Heart right ventricle (tissue), 16 donors: ENCODE measurements at regions of chr1 and their contacts with region 1.

Region 1: DNA sequence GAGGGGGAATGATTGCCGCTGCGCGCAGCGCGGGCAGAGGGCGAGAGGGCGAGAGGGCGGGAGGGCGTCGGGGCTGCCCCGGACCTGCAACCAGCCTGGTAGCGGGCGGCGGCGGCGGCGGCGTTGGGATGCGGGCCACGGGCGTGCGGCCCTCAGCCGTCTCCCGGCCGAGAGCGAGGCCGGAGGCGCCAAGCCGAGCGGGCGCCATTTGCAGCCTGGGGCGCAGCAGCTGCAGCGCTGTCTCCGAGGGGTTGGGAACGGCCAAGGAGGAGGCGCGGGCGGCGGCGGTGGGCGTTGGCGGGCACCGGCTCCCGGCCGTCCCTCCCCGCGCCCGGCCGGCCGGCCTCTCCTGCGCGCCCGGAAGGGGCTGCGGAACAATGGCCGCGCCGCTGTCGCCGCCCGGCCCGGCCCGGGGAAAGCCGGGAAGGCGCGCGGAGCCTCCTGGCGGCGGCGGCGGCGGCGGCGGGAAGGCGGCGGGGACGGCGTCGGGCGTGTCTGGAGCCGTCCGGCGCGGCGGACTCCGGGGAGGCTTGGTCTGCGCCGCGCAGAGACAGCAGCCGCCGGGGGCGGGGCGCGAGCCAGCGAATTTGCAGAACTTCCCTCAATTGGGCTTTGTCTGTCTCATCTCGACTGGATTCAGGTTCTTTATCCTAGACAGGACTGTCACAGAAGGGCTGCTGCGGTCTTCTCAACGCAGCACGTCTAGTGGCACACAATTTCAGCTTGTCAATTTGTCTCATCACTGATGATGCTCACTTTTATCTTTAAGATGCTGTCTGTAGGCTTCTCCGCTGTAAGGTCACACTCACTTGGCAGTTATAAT is 35.7 kb downstream of the ZBTB8B start:
- DNase-seq: peak; percentile 60 to 81
- ATAC-seq: peak; percentile 79 to 92 (median 87)
- H3K4me3 ChIP-seq: peak overlapping the region; percentile 44 to 93 (median 76)
- H3K27ac ChIP-seq: peak overlapping the region; percentile 92 to 100 (median 98)
- H3K4me1 ChIP-seq: peaks cover 3 to 33% (median 23%) of the 10 kb centered on the region in 9 donors
- H3K27me3 ChIP-seq: no peaks in the 10 kb centered on the region
- CTCF ChIP-seq: peak in 6 of 9 donors; percentile 11 to 48 (median 32)

Region 2: GRCh38 chr1:32421775-32422174 is 78.8 kb before region 1 on chr1:
- intact Hi-C with region 1: no loop called
- DNase-seq: no peak
- ATAC-seq: no peak
- H3K4me3 ChIP-seq: no peak overlapping the region
- H3K27ac ChIP-seq: no peak overlapping the region
- H3K4me1 ChIP-seq: peaks cover 0 to 7% (median 5%) of the 10 kb centered on the region in 9 donors
- H3K27me3 ChIP-seq: peaks cover 3 to 38% (median 26%) of the 10 kb centered on the region in 7 donors
- CTCF ChIP-seq: no peak

Region 3: GRCh38 chr1:32438136-32438535 is 62.5 kb before region 1 on chr1:
- intact Hi-C with region 1: no loop called
- DNase-seq: no peak
- ATAC-seq: no peak
- H3K4me3 ChIP-seq: no peak overlapping the region
- H3K27ac ChIP-seq: no peak overlapping the region
- H3K4me1 ChIP-seq: no peaks in the 10 kb centered on the region
- H3K27me3 ChIP-seq: peaks cover 0 to 17% (median 4%) of the 10 kb centered on the region in 7 donors
- CTCF ChIP-seq: no peak

Region 4: GRCh38 chr1:32448773-32449456 is 51.7 kb before region 1 on chr1:
- intact Hi-C with region 1: loop called in 1 of 10 experiments (anchors 5 kb)
- DNase-seq: no peak
- ATAC-seq: no peak
- H3K4me3 ChIP-seq: no peak overlapping the region
- H3K27ac ChIP-seq: no peak overlapping the region
- H3K4me1 ChIP-seq: peaks cover 0 to 6% (median 0%) of the 10 kb centered on the region in 9 donors
- H3K27me3 ChIP-seq: peaks cover 0 to 10% (median 0%) of the 10 kb centered on the region in 7 donors
- CTCF ChIP-seq: no peak

Region 5: GRCh38 chr1:32454726-32455125 is 45.9 kb before region 1 on chr1:
- intact Hi-C with region 1: loop called in 2 of 10 experiments (anchors 5 kb)
- DNase-seq: peak; percentile 11 to 23
- ATAC-seq: peak in 3 of 8 donors; percentile 34 to 66 (median 53)
- H3K4me3 ChIP-seq: no peak overlapping the region
- H3K27ac ChIP-seq: no peak overlapping the region
- H3K4me1 ChIP-seq: peaks cover 0 to 7% (median 0%) of the 10 kb centered on the region in 9 donors
- H3K27me3 ChIP-seq: peaks cover 0 to 4% (median 0%) of the 10 kb centered on the region in 7 donors
- CTCF ChIP-seq: no peak

Region 6: DNA sequence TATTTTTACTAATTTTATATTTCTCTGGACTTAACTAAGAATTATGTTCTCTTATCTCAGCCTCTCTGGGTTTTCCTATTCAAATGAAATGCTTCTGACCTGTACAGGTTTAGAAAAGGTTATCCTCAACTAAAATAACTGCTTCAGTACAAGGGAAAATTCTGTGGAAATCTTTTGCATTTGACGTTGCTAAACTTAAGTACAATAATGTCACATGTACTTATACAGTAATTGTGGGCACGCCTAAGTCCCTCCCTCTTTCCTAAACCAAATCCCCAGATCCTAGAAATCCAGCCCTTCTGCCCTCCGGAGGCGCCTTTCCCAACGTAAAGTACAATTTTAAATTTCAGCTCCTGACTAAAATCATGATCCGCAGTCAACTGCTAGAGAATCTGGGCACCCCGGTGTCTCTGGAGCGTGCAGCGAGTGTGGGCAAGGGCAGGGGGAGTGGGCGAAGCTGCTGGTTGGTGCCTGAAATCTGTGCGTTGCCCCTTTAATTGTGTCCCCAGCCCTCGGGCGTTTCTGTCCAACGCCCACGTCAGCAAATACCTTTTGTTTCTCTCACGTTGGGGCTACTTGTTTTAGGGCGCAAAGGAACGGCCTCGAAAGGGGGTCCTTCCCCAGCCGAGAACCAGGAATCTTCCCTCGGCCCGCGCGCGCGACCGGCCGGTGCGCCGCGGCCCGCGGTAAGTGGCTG is 38.4 kb after region 1 on chr1 and contains the start of gene ZBTB8A:
- intact Hi-C with region 1: loop called in 2 of 10 experiments (anchors 2 kb)
- DNase-seq: peak; percentile 19 to 29
- ATAC-seq: peak in 6 of 8 donors; percentile 10 to 71 (median 62)
- H3K4me3 ChIP-seq: peak within 1 kb of the TSS; percentile 24 to 74 (median 64)
- H3K27ac ChIP-seq: peak within 1 kb of the TSS; percentile 44 to 84 (median 74)
- H3K4me1 ChIP-seq: peaks cover 0 to 18% (median 11%) of the 10 kb centered on the region in 9 donors
- H3K27me3 ChIP-seq: peaks cover 0 to 32% (median 0%) of the 10 kb centered on the region in 7 donors
- CTCF ChIP-seq: no peak
- total RNA-seq, gene ZBTB8A: 2.7 to 3.8 (median 3.1) TPM

Region 7: DNA sequence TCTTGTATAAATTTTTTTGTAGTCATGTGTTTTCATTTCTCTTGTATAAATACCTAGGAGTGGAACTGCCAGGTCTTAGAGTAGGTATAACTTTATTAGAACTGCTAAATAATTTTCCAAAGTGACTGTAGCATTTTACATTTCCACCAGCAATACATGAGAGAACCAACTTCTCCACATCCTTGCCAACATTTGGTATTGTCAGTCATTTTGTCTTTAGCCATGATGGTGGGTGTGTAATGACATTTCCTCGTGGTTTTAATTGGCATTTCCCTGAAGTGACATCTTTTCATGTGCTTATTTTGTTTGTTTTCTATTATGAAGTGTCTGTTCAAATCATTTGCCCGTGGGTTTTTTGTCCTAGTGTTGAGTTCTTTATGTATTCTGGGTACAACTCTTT is 68.3 kb after region 1 on chr1:
- intact Hi-C with region 1: no loop called
- DNase-seq: no peak
- ATAC-seq: no peak
- H3K4me3 ChIP-seq: no peak overlapping the region
- H3K27ac ChIP-seq: no peak overlapping the region
- H3K4me1 ChIP-seq: no peaks in the 10 kb centered on the region
- H3K27me3 ChIP-seq: no peaks in the 10 kb centered on the region
- CTCF ChIP-seq: no peak